Activated naive CD4-positive, alpha-beta T cell treated with anti-CD3 and anti-CD28 coated beads for 36 hours (primary cell): ENCODE measurements at regions of chr1 and their contacts with region 1.

Region 1: GRCh38 chr1:202348509-202349205 is at the start of gene PPP1R12B:
- DNase-seq: peak; percentile 98
- H3K4me3 Mint-ChIP-seq: peak within 1 kb of the TSS; percentile 86
- H3K27ac Mint-ChIP-seq: peak within 1 kb of the TSS; percentile 81
- H3K4me1 Mint-ChIP-seq: peaks cover 24% of the 10 kb centered on the region
- H3K27me3 Mint-ChIP-seq: no peaks in the 10 kb centered on the region
- total RNA-seq, gene PPP1R12B: 11.0 to 12.4 TPM

Region 2: DNA sequence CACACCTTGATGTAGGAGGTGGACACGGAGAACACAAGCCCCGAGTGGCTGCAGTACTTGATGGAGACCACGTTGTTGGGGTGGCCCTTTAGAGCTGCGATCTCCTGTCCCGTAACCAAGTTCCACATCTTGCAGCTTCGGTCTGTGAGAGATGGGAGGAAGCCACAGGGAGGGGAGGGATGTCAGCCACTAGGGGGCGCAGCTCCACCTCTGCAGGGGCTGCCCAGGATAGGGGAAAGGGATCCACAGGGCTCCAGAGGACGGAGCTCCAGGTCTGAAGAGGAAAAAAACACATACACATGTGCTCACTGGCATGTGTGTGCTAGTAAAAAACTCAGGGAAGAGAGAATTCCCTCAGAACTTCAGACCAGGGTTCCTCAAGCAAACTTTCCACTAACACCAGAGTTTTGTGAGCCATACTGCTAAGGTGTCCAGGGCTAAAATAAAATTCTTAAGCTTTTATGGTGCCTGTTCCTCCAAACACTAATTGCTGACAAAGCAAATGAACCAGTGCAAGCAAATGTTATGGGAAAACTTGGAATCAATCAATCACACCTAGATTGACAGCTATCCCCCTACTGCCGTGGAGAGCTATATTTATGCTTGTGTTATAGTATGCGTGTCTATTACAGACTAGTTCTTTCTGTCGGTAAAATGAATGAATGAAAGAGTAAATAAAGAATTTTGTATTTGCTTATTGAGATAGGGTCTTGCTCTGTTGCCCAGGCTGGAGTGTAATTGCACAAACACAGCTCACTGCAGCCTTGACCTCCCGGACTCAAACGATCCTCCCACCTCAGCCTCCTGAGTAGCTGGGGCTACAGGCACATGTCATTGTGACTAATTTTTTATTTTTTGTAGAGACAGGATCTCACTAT is 1368.8 kb before region 1 on chr1:
- CTCF ChIA-PET with region 1: no interaction called
- intact Hi-C with region 1: no loop called
- DNase-seq: peak; percentile 83
- H3K4me3 Mint-ChIP-seq: no peak overlapping the region
- H3K27ac Mint-ChIP-seq: no peak overlapping the region
- H3K4me1 Mint-ChIP-seq: no peaks in the 10 kb centered on the region
- H3K27me3 Mint-ChIP-seq: no peaks in the 10 kb centered on the region

Region 3: DNA sequence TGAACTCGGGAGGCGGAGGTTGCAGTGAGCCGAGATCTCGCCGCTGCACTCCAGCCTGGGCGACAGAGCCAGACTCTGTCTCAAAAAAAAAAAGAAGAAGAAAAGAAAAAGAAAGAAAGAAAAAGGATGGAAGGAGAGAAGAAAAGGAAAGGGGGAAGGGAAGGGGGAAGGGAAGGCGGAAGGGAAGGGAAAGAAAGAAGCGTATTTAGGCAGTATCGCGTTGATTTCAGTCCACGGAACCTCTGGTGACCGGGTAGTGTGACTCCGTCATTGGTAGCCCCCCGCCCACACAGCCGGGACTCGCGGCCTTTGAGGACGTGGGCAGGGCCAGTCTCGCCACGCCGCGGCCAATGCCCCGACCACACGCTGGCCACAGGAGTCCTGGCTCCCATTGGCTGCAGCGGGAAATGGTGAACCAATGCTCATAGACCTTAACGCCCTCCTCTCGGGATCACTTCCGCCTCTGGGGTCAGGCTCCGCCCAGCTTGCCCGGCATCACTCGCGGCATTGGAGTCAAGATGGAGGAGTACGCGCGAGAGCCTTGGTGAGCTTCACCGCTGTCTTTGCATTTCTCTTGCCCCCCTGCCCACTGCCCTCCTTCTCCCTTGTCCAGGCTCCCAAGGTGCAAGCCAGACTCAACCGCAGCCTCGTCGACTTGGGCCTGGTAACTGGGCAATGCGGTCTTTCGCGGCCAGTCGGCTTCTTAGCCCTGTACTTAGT is 393.5 kb before region 1 on chr1 and contains the start of gene TIMM17A:
- CTCF ChIA-PET with region 1: no interaction called
- intact Hi-C with region 1: loop called (anchors 2 kb)
- DNase-seq: peak; percentile 98
- H3K4me3 Mint-ChIP-seq: peak within 1 kb of the TSS; percentile 96
- H3K27ac Mint-ChIP-seq: peak within 1 kb of the TSS; percentile 92
- H3K4me1 Mint-ChIP-seq: peaks cover 20% of the 10 kb centered on the region
- H3K27me3 Mint-ChIP-seq: no peaks in the 10 kb centered on the region
- total RNA-seq, gene TIMM17A: 52.6 to 54.4 TPM

Region 4: DNA sequence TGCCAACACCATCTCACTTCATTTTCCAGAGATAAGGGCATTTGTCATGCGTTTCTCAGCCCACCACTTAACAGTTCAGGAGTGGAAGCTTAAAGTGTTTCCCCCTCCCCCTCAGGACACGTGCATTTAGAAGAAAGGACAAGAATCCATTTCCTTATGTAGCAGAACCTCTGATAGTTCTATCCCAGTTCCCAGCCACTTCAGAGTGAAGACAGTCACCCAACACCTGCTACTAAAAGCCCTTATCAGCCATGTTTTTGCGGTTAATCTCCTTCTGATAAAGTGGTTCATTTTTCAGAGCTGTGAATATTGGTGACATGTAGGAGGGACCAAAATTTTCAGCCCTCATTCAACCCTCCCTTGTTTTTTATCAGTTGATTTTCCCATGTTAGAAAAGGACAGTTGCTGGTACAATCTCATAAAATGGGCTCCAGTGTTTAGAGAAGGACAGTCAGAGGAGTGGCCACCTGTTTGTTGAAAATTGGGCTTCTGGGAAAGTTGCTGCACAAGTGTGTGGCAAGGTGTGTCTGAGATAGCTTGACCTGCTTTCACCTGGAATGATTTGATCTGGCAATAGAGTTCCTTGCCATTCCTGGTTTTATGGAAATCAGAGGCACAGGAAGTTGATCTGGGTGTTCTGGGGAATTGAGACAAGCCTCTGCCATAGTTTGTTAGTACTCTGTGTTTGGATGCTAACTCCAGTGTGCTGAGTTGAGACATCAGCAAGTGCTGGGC is 113.9 kb after region 1 on chr1:
- CTCF ChIA-PET with region 1: no interaction called
- intact Hi-C with region 1: loop called (anchors 5 kb)
- DNase-seq: no peak
- H3K4me3 Mint-ChIP-seq: no peak overlapping the region
- H3K27ac Mint-ChIP-seq: no peak overlapping the region
- H3K4me1 Mint-ChIP-seq: no peaks in the 10 kb centered on the region
- H3K27me3 Mint-ChIP-seq: no peaks in the 10 kb centered on the region

Region 5: DNA sequence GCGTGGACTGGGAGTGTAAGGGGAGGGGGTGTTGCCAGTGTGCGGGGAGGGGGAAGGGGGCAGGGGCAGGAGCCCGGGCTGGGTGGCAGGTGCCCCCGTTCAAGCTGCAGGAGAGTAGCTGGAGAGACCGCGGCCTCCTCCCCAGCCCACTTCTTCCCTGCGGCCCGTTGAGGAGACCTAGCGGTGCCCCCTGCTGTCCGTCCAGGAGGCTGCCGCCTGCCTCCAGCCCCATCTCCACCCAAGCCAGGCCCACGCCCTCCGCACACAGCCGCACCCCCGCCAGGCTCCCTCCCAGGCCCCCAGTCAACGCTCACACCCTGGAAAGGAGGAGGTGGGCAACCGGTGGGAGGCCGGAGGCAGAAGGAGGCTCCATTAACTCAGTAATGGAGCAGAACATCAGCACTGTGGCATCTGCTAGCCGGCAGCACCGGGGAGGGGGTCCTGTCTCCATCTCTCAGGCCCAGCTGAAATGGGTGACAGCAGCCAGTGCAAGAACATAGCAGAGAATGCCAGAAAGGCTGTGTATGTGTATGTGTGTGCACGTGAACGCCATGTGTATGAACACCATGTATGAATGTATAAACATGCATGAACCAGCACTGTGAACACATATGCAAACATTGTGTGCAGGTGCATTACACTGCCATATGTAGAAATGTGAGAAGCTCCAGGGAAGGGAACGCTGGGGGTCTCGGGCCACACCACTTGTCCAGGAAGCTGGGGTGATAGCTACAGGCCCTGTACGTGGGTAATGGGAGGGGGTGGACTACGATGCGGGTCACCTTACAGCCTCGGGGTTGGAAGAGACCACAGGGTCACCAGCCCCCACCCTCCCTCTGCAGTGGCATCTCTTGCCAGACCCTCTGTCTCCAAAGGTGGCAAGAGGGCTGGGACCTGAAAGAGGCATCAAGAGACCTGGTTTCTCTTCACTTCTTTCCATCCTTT is 277.0 kb after region 1 on chr1:
- CTCF ChIA-PET with region 1: no interaction called
- intact Hi-C with region 1: loop called (anchors 2 kb)
- DNase-seq: peak; percentile 74
- H3K4me3 Mint-ChIP-seq: no peak overlapping the region
- H3K27ac Mint-ChIP-seq: no peak overlapping the region
- H3K4me1 Mint-ChIP-seq: peaks cover 29% of the 10 kb centered on the region
- H3K27me3 Mint-ChIP-seq: peaks cover under 1% of the 10 kb centered on the region

Region 6: DNA sequence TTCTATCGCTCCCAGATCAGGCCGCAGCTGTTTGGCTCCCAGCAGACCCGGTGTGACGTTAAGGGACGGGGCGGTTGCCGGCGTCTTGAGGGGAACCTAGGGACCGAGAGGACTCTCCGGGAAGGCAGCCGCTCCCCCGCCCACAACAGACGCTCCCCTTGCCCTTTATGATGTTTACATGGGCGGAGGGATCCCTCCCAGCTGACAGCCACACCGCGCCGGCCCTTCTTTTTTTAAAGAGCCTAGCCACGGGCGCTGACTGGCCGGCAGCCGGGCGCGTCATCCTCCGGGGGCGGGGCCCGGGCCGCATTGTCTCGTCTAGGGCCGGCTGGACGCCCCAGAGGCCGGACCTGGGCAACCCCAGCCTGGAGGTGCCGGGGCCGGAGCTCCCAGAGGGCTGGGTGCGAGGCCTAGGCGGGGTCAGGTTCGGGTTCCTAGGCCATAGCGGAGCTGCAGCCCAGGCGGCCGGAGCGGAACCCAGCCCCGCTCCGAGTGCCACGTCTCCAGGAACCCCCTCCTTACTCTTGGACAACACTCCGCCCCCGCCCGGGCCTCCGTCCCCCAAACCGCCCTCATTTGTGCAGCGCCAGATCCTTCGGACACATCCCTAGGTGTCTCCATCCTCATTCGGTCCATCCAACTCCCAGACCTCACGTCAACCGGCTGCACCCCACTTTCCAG is 462.1 kb after region 1 on chr1 and contains the start of gene PCAT6:
- CTCF ChIA-PET with region 1: no interaction called
- intact Hi-C with region 1: loop called (anchors 5 kb)
- DNase-seq: peak; percentile 90
- H3K4me3 Mint-ChIP-seq: peak within 1 kb of the TSS; percentile 74
- H3K27ac Mint-ChIP-seq: no peak within 1 kb of the TSS
- H3K4me1 Mint-ChIP-seq: peaks cover 31% of the 10 kb centered on the region
- H3K27me3 Mint-ChIP-seq: no peaks in the 10 kb centered on the region
- total RNA-seq, gene PCAT6: 0.37 to 0.43 TPM

Region 7: GRCh38 chr1:202968840-202969295 is 620.2 kb after region 1 on chr1:
- CTCF ChIA-PET with region 1: no interaction called
- intact Hi-C with region 1: loop called (anchors 10 kb)
- DNase-seq: peak; percentile 56
- H3K4me3 Mint-ChIP-seq: no peak overlapping the region
- H3K27ac Mint-ChIP-seq: no peak overlapping the region
- H3K4me1 Mint-ChIP-seq: peaks cover 28% of the 10 kb centered on the region
- H3K27me3 Mint-ChIP-seq: no peaks in the 10 kb centered on the region

Region 8: DNA sequence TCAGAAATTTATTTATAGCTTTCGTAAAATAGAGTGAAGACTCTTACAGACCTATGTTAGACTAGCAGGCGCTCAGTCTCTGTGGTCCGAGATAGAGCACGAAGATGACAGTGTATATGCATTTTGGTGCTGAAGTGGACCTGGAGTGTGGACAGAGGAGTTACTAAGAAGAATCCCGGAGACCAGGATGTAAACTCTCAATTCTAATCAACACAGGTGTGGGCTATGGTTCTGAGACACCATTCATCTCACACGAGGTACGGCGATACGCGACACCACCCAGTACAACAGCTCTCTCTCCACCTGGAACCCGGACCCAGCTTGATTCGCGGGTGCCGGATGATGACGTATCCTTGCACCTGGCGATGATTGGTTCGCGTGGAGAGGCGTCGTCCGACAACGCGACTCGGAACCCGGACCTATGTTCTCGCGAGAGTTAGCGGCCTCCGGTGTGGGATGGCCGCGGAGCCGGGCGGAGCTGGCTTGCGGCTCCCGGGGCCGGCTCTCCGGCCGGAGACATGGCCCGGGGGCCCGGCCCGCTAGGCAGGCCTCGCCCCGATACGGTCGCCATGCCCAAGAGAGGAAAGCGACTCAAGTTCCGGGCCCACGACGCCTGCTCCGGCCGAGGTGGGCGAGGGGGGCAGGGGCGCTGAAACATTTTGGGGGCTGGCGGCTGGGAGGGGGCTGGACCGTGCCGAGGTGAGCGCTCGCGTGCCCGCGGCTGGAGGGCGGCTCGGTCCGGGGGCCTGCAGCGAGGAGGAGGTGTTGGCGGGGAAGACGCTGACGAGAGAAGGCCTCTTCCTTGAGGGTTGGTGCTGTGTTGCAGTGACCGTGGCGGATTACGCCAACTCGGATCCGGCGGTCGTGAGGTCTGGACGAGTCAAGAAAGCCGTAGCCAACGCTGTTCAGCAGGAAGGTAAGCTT is 658.6 kb after region 1 on chr1 and contains the start of gene TMEM183A:
- CTCF ChIA-PET with region 1: no interaction called
- intact Hi-C with region 1: loop called (anchors 1 kb)
- DNase-seq: peak; percentile 98
- H3K4me3 Mint-ChIP-seq: peak within 1 kb of the TSS; percentile 79
- H3K27ac Mint-ChIP-seq: peak within 1 kb of the TSS; percentile 93
- H3K4me1 Mint-ChIP-seq: peaks cover 27% of the 10 kb centered on the region
- H3K27me3 Mint-ChIP-seq: no peaks in the 10 kb centered on the region
- total RNA-seq, gene TMEM183A: 80.3 to 90.6 TPM